Dorsolateral prefrontal cortex (tissue), 120 donors: ENCODE measurements at regions of chr6 and their contacts with region 1.

Region 1: GRCh38 chr6:89638320-89639195 is at the start of gene LYRM2:
- DNase-seq: peak; percentile 92 to 97 (median 95)
- H3K4me3 ChIP-seq: peak within 1 kb of the TSS; percentile 56 to 92 (median 79)
- H3K27ac ChIP-seq: peak within 1 kb of the TSS; percentile 73 to 99 (median 97)
- H3K27me3 ChIP-seq: no peaks in the 10 kb centered on the region
- CTCF ChIP-seq: peak in 44 of 56 donors; percentile 15 to 63 (median 37)
- total RNA-seq, gene LYRM2: 30.1 to 60.1 (median 43.4) TPM

Region 2: DNA sequence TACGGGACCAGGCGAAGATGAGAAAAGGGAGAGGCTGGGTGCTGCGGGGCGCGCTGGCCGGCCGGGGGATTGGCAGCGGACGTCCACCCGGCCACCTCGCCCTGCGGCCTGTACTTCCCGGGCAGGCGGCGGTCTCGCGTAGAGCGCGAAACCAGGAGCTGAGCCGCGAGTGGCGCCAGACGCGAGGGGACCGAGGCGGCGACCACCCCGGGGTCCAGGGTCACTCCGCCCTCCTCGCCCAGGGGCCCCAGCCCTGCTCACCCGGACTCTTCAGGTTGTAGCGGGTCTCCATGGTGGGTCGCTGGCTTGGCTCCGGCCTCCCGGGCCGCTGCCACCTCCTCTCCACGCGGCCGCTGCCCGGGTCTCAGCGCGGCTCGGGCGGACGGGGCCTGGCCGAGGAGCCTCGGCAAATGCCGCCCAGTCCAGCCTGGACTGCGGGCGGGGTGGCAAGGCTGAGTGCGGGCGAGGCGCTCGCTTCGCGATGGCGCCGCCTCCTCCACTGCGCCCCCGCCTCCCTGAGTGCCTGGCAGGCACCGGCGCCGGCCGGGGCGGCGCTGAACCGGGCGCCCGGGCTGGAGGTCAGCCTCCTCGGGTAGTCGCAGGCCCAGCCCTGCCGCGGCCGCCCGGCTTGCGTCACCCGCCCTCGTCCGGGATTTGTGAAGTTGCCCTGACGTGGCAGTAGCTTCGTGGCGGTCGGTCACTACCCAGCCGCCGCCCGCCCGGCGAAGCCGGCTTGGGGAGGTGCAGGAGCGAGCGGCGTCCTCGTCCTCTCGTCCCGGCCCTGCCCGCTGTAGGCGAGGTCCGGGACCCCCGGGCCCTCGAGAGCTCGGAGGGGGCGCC is 286.1 kb before region 1 on chr6 and contains the start of gene UBE2J1:
- intact Hi-C with region 1: loop called in 1 of 2 experiments (anchors 10 kb)
- DNase-seq: peak; percentile 74 to 92 (median 86)
- H3K4me3 ChIP-seq: peak within 1 kb of the TSS; percentile 75 to 99 (median 92)
- H3K27ac ChIP-seq: peak within 1 kb of the TSS; percentile 85 to 99 (median 96)
- H3K27me3 ChIP-seq: no peaks in the 10 kb centered on the region
- CTCF ChIP-seq: peak in 22 of 56 donors; percentile 1 to 63 (median 29)
- total RNA-seq, gene UBE2J1: 16.6 to 28.5 (median 23.0) TPM

Region 3: GRCh38 chr6:89432875-89433251 is 205.7 kb before region 1 on chr6 and contains the start of gene ANKRD6:
- intact Hi-C with region 1: loop called in 1 of 2 experiments (anchors 2 kb)
- DNase-seq: peak in 9 of 10 donors; percentile 36 to 83 (median 65)
- H3K4me3 ChIP-seq: peak within 1 kb of the TSS; percentile 54 to 91 (median 78)
- H3K27ac ChIP-seq: peak within 1 kb of the TSS in 8 of 59 donors; percentile 2 to 82 (median 48)
- H3K27me3 ChIP-seq: no peaks in the 10 kb centered on the region
- CTCF ChIP-seq: peak; percentile 48 to 96 (median 80)
- total RNA-seq, gene ANKRD6: 14.2 to 73.6 (median 37.4) TPM

Region 4: GRCh38 chr6:89623749-89624148 is 14.8 kb before region 1 on chr6:
- intact Hi-C with region 1: no loop called
- DNase-seq: no peak
- H3K4me3 ChIP-seq: no peak overlapping the region
- H3K27ac ChIP-seq: no peak overlapping the region
- H3K27me3 ChIP-seq: no peaks in the 10 kb centered on the region
- CTCF ChIP-seq: no peak

Region 5: GRCh38 chr6:89675949-89676748 is 37.6 kb after region 1 on chr6:
- intact Hi-C with region 1: no loop called
- DNase-seq: peak in 1 of 10 donors; percentile 16
- H3K4me3 ChIP-seq: no peak overlapping the region
- H3K27ac ChIP-seq: peak overlapping the region in 3 of 59 donors; percentile 11 to 38 (median 37)
- H3K27me3 ChIP-seq: no peaks in the 10 kb centered on the region
- CTCF ChIP-seq: no peak

Region 6: DNA sequence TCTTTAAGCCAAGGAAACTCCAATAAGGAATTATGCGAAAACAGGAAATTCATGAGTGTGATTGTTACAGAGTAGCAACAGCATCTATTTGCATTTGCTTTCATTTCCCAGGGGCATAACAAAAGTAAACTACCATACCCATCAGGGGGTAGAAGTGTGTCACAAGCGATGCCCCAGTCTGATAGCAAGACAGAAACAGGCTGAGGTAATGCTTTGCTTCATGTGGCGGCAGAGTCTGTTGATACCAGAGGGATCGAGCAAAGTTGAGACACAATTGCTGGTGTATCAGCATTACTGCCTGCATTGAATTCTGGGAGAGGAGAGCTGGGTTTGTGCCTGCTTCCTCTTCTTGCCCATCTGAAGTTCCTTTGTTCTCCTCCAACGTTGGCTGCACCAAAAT is 51.2 kb after region 1 on chr6:
- intact Hi-C with region 1: loop called in 1 of 2 experiments (anchors 5 kb)
- DNase-seq: peak in 9 of 10 donors; percentile 10 to 89 (median 58)
- H3K4me3 ChIP-seq: peak overlapping the region in 57 of 59 donors; percentile 6 to 64 (median 42)
- H3K27ac ChIP-seq: peak overlapping the region; percentile 58 to 98 (median 89)
- H3K27me3 ChIP-seq: no peaks in the 10 kb centered on the region
- CTCF ChIP-seq: peak in 10 of 56 donors; percentile 8 to 51 (median 16)

Region 7: DNA sequence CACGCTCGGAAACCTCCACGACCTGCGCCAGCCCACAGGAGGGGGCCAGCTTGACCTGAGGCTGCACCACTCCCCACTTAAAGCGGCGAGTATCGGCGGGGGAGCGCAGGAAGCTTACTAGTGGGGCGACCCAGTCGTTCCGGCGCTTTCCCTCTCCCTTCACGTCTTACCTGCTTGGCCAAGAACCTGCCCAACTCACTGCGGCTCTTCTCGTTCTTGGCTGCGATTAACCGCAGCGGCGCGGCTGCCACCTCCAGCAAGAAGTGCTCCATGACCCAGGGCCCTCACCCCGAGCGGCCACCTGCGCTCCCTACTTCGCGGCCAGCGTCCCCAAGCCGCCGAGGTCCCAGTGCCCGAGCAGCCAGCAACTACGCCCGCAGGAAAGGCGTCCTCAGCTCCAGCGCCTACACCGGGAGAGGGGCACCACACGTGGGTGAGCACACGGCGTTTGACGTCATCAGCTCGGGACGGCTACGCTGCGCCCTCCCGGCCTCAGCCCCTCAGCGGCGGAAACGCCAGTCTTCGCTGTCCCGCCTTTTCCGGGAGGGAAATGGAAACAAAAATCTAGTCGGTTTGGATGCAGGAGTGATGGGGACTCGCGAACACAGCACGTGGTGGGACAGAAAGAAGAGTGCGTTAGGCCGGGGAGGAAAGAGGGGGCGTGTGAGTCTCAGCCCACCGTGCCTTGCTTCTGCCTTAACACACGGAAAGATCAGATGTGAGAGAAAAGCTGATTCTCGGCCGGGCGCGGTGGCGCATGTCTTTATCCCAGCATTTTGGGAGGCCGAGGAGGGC is 181.0 kb after region 1 on chr6 and contains the start of gene MDN1:
- intact Hi-C with region 1: loop called in 1 of 2 experiments (anchors 10 kb)
- DNase-seq: peak; percentile 83 to 95 (median 92)
- H3K4me3 ChIP-seq: peak within 1 kb of the TSS; percentile 62 to 99 (median 89)
- H3K27ac ChIP-seq: peak within 1 kb of the TSS in 58 of 59 donors; percentile 10 to 92 (median 76)
- H3K27me3 ChIP-seq: no peaks in the 10 kb centered on the region
- CTCF ChIP-seq: peak in 17 of 56 donors; percentile 4 to 47 (median 23)
- total RNA-seq, gene MDN1: 51.0 to 84.3 (median 67.6) TPM